Naive thymus-derived CD4-positive, alpha-beta T cell (primary cell): ENCODE measurements at regions of chr9 and their contacts with region 1.

Region 1: DNA sequence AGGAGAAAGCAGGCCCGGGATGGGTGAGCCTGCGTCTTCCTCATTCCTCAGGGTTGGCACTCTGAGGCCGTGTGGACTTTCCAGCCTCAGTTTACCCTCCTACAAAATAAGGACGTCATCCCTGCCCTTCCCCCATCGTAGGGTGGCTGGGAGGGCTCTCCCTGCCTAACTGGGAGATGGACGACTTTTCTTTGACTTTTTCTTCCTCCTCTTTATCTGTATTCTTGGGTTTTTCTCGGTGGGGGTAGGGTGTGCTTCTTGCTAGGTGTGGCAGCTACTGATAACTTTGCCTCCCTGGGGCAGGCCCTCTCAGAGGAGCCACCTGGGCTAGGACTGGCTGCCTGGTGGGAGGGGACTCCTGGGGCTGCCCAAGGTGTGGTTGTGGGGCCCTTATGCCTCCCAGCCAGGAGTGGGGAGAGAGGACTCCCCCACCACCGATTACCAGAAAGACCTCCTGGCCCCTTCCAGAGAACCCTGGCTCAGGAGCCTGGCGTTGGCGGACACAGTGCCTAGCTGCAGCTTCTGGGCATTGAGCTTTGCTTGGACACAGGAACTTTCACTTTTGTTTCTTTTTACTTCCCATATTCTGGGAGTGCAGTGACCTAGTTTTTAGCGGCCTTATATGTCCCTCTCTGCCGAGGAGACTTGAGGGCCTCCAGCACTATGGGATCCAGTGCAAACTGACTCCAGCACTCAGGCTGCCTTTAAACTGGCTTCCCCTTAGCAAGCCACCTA is 6.1 kb downstream of the GLIPR2 start:
- DNase-seq: no peak
- ATAC-seq: peak; percentile 31
- H3K4me3 ChIP-seq: peak overlapping the region; percentile 49
- H3K4me3 Mint-ChIP-seq: peak overlapping the region; percentile 84 to 94 (median 90)
- H3K27ac ChIP-seq: peak overlapping the region; percentile 79
- H3K27ac Mint-ChIP-seq: peak overlapping the region; percentile 89 to 100 (median 98)
- H3K4me1 ChIP-seq: peaks cover 86 to 87% of the 10 kb centered on the region in 2 donors
- H3K4me1 Mint-ChIP-seq: peaks cover 90 to 98% (median 95%) of the 10 kb centered on the region in 7 donors
- H3K27me3 ChIP-seq: no peaks in the 10 kb centered on the region
- H3K27me3 Mint-ChIP-seq: peaks cover 0 to 3% (median 0%) of the 10 kb centered on the region in 5 donors

Region 2: DNA sequence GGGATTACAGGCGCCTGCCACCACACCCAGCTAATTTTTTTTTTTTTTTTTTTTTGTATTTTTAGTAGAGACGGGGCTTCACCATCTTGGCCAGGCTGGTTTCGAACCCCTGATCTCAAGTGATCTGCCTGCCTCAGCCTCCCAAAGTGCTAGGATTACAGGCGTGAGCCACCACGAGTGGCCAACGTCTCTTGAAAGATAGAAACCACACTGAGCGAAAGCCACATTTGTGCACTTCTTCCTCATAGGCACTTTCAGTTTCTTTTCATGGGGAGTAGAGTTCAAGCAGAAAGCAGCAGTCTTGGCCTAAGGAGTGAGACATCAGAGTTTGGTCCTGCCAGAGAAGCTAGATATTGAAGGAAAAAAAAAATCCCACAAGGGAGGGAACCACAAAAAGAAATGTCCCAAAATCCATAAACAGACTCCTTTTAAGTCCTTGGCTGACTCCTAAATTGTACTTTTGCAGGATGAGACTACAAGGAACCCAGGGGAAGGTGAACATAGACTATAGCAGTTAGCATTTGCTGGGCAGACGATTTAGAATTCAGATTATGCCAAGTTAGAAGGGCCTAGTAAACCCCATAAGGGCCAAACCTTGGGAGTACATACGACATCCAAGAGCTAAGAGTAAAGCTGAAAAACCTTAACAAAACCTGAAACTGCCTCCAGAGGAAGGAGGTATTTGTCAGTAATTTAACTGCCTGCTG is 50.0 kb before region 1 on chr9:
- CTCF ChIA-PET with region 1: no interaction called
- POLR2A ChIA-PET with region 1: no interaction called
- intact Hi-C with region 1: loop called in 1 of 2 experiments (anchors 2 kb)
- DNase-seq: peak in 8 of 9 donors; percentile 14 to 58 (median 34)
- ATAC-seq: peak; percentile 90
- H3K4me3 ChIP-seq: peak overlapping the region; percentile 1
- H3K4me3 Mint-ChIP-seq: peak overlapping the region; percentile 50 to 83 (median 73)
- H3K27ac ChIP-seq: peak overlapping the region; percentile 38
- H3K27ac Mint-ChIP-seq: peak overlapping the region; percentile 35 to 95 (median 87)
- H3K4me1 ChIP-seq: peaks cover 0 to 5% of the 10 kb centered on the region in 2 donors
- H3K4me1 Mint-ChIP-seq: peaks cover 15 to 21% (median 17%) of the 10 kb centered on the region in 7 donors
- H3K27me3 ChIP-seq: no peaks in the 10 kb centered on the region
- H3K27me3 Mint-ChIP-seq: no peaks in the 10 kb centered on the region